A673 (cell line): ENCODE measurements at regions of chr6 and their contacts with region 1.

Region 1: GRCh38 chr6:136669299-136669699 is 119.1 kb upstream of the MAP7 start:
- DNase-seq: peak; percentile 36
- H3K4me3 ChIP-seq: no peak overlapping the region
- H3K27ac ChIP-seq: no peak overlapping the region
- H3K4me1 ChIP-seq: peaks cover 6% of the 10 kb centered on the region
- H3K27me3 ChIP-seq: no peaks in the 10 kb centered on the region
- CTCF ChIP-seq: no peak

Region 2: DNA sequence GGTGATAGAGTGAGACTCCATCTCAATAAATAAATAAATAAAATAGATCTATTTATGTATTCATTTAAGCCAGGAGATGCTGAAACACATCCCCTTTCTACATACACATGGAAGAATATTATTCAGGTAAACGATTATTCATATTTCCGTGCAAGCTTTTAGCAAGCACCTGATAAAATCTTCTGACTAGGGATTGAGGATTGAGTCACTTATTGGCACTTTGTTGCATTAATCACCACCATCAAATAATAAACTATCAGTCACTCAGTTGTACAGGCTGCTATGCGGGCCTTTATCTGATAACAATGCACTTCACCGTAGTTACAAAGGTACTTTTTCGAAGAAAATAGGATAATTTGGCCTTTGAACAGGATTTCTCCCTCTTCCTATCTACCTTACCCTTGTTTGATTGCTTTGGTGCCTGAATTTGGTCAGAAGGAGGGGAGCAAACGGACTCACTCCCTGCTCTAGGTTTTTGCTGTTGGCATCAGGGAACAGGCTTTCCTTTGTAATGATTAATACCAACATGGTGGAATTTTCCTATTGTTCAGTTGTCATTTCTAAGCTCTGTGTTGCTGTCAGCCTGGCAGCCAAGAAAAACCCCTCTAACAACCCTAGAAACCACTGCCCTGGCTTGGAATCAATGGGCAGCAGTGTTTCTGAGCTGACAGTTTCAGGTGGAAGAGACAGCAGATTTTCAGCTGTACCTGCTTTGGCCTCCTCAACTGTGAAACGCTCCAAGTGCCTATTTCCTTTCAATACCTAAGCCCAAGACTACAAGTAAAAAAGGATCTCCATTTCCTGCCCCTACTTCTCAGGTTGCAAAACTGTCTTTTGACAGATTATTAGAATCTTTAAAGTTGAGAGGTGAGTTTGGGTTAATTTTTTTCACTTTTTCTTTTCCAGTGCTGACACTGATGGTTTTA is 1425.2 kb before region 1 on chr6:
- CTCF ChIA-PET with region 1: no interaction called
- POLR2A ChIA-PET with region 1: interaction called, 33 read pairs
- intact Hi-C with region 1: no loop called
- DNase-seq: no peak
- H3K4me3 ChIP-seq: no peak overlapping the region
- H3K27ac ChIP-seq: peak overlapping the region; percentile 25
- H3K4me1 ChIP-seq: peaks cover 11% of the 10 kb centered on the region
- H3K27me3 ChIP-seq: no peaks in the 10 kb centered on the region
- CTCF ChIP-seq: no peak